ENCODE measurements at regions of chr11 and their contacts with region 1.

Region 1: DNA sequence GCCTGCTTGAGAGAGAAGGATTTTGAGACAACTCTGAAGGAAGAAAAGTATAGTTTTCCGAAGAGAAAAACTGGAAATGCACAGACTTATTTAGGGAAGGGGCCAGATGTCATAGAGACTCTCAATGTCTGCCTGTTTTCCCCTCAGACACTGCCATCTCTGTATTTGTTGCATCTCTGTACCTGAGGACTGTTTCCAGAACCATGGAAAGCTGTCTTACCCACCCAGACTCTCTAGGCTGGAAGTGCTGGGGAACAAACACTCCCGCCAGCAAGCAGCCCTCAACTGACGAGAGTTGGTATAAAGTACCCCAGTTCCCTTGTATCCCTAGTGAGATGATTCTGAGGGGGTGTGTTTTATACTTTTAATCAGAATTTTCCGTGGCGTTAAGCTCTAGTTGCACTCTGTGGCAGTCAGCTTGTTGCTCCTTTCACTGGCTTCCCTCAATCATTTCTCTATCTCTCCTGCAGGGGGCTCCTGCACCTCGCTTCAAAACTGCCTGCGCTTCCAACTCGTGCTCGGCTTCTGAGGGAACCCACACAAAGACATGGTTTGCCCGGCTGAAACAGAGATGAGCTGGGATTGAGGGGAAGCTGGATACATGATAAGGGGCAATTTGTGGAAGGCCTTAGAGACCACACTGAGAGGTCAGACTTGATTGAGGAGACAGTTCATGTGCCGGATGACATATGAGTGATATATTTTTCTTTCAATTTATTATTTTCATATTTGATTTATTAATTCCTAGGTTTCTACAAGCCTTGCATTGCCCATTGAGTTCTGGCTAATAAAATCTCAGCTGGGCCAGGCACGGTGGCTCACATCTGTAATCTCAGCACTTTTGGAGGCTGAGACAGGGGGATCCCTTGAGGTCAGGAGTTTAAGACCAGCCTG is 36.9 kb upstream of the CLPB start:
- DNase-seq: no peak
- ATAC-seq: peak; percentile 97
- H3K4me3 ChIP-seq: peak overlapping the region in 1 of 2 experiments; percentile 21; a peak in 2 of 4 replicates
- H3K27ac ChIP-seq: no peak overlapping the region
- H3K4me1 ChIP-seq: peaks cover 7% of the 10 kb centered on the region; the same call in 1 of the 2 replicates
- H3K27me3 ChIP-seq: peaks cover 43% of the 10 kb centered on the region
- CTCF ChIP-seq: peak; percentile 98

Region 2: DNA sequence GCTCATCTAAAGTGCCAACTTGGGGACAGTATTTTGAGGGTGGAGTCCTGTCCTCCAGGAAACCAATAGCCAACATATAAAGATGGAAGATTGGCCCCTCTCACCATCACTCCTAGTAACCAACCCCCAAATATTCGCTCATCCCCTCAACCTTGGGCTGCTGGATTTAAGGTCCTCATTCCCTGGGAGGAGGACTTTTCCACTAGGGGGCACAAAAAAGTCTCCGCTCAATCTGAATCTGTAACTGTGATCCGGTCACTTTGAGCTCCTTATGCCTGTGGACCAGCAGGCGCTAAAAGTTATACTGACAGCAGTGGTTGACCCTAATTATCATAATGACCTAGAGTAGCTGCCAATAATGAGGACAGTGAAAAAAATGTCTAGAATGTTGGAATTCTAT is 16.5 kb before region 1 on chr11:
- CTCF ChIA-PET with region 1: interaction called, 10 read pairs
- POLR2A ChIA-PET with region 1: no interaction called
- in situ Hi-C with region 1: no loop called
- intact Hi-C with region 1: no loop called
- DNase-seq: no peak
- ATAC-seq: no peak
- H3K4me3 ChIP-seq: no peak overlapping the region
- H3K27ac ChIP-seq: no peak overlapping the region
- H3K4me1 ChIP-seq: no peaks in the 10 kb centered on the region
- H3K27me3 ChIP-seq: peaks cover 11% of the 10 kb centered on the region
- CTCF ChIP-seq: peak; percentile 65

Region 3: GRCh38 chr11:72573072-72573854 is 102.0 kb after region 1 on chr11:
- CTCF ChIA-PET with region 1: interaction called, 15 read pairs
- POLR2A ChIA-PET with region 1: no interaction called
- in situ Hi-C with region 1: no loop called
- intact Hi-C with region 1: loop called (anchors 2 kb)
- DNase-seq: no peak
- ATAC-seq: peak; percentile 88
- H3K4me3 ChIP-seq: no peak overlapping the region; a peak in 1 of 4 replicates
- H3K27ac ChIP-seq: no peak overlapping the region
- H3K4me1 ChIP-seq: 0 out of 2 replicates have a peak, but pooled peaks cover 2% of the 10 kb centered on the region
- H3K27me3 ChIP-seq: peaks cover 7% of the 10 kb centered on the region
- CTCF ChIP-seq: peak; percentile 89; the same call in 1 of the 2 replicates

Region 4: GRCh38 chr11:72642884-72643511 is 171.7 kb after region 1 on chr11:
- CTCF ChIA-PET with region 1: interaction called, 5 read pairs
- POLR2A ChIA-PET with region 1: no interaction called
- in situ Hi-C with region 1: no loop called
- intact Hi-C with region 1: loop called (anchors 10 kb)
- DNase-seq: peak; percentile 48
- ATAC-seq: peak; percentile 85
- H3K4me3 ChIP-seq: peak overlapping the region; percentile 37 to 50
- H3K27ac ChIP-seq: peak overlapping the region; percentile 40
- H3K4me1 ChIP-seq: peaks cover 6% of the 10 kb centered on the region; the same call in 1 of the 2 replicates
- H3K27me3 ChIP-seq: peaks cover 13% of the 10 kb centered on the region
- CTCF ChIP-seq: peak; percentile 99

Region 5: GRCh38 chr11:72683782-72684200 is 212.5 kb after region 1 on chr11:
- CTCF ChIA-PET with region 1: interaction called, 20 read pairs
- POLR2A ChIA-PET with region 1: no interaction called
- in situ Hi-C with region 1: no loop called
- intact Hi-C with region 1: loop called (anchors 2 kb)
- DNase-seq: peak; percentile 52
- ATAC-seq: peak; percentile 73
- H3K4me3 ChIP-seq: no peak overlapping the region
- H3K27ac ChIP-seq: no peak overlapping the region
- H3K4me1 ChIP-seq: peaks cover 18% of the 10 kb centered on the region
- H3K27me3 ChIP-seq: peaks cover 6% of the 10 kb centered on the region
- CTCF ChIP-seq: peak; percentile 98

Measured in Panc1 (cell line).